ENCODE measurements at regions of chr20 and their contacts with region 1.

Region 1: GRCh38 chr20:63381807-63382322 is 20.7 kb upstream of the CHRNA4 start:
- DNase-seq: peak; percentile 35 to 78 (median 76)
- ATAC-seq: peak; percentile 77
- H3K4me3 ChIP-seq: no peak overlapping the region
- H3K27ac ChIP-seq: no peak overlapping the region
- H3K4me1 ChIP-seq: peaks cover 0 to 8% of the 10 kb centered on the region in 2 experiments; a peak in 2 of 5 replicates
- H3K27me3 ChIP-seq: peaks cover 0 to 33% of the 10 kb centered on the region in 2 experiments; a peak in 2 of 5 replicates
- CTCF ChIP-seq: peak; percentile 81 to 94 (median 94)
- EP300 ChIP-seq: no peak
- POLR2A ChIP-seq: no peak
- RAD21 ChIP-seq: peak; percentile 58 to 84

Region 2: GRCh38 chr20:63183422-63184348 is 198.2 kb before region 1 on chr20:
- CTCF ChIA-PET with region 1: interaction called, 4 read pairs
- POLR2A ChIA-PET with region 1: no interaction called
- in situ Hi-C with region 1: no loop called
- intact Hi-C with region 1: loop called (anchors 5 kb)
- DNase-seq: peak; percentile 65 to 76 (median 69)
- ATAC-seq: peak; percentile 90
- H3K4me3 ChIP-seq: no peak overlapping the region
- H3K27ac ChIP-seq: no peak overlapping the region
- H3K4me1 ChIP-seq: peaks cover 0 to 17% of the 10 kb centered on the region in 2 experiments; a peak in 2 of 5 replicates
- H3K27me3 ChIP-seq: peaks cover 0 to 14% of the 10 kb centered on the region in 2 experiments; a peak in 2 of 5 replicates
- CTCF ChIP-seq: peak; percentile 87 to 93 (median 87)
- EP300 ChIP-seq: no peak
- POLR2A ChIP-seq: no peak
- RAD21 ChIP-seq: peak; percentile 59 to 81

Region 3: DNA sequence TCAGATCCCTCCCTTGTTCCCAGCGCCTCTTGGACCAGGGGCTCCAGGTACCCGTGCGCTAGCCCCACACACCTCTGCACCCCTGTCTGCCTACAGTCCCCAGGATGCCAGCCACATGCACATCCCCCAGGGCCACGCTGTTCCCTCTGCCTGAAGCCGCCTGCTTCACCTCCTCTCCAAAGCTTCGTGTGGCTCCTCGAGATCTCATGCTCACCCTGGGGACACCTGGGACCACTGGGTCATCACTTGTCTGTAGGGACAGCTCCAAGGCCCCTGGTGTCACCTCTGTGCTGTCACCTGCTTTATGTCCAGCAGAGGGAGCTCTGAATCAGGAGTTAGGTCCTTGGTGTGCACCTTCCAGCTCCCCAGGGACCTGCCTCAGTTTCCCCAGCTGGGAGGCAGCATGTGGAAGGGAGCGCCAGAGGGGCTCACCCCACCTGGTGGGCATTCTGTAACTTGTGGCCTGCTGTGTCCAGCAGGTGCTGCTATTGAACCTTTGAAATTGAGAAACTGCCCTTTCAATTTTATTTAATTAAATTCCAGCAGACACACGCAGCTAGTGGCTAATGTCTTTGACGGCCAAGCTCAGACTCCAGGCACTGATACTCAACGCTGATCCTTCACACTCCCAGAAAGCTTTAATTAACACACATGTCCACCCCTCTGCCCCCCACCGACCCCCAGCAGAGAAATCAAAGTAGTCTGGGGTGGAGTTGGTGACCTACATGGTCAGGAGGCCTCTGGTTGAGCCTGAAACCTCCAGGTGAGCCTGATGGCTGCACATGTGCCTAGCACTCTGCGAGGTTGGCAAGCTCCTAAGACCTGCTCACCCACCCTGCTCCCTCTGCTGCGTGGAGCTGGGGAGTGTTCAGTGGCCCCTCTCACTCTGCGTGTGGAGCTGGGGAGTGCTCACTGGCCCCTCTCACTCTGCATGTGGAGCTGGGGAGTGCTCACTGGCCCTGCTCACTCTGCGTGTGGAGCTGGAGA is 158.4 kb before region 1 on chr20:
- CTCF ChIA-PET with region 1: interaction called, 4 read pairs
- POLR2A ChIA-PET with region 1: interaction called, 3 read pairs
- in situ Hi-C with region 1: no loop called
- intact Hi-C with region 1: loop called (anchors 5 kb)
- DNase-seq: peak; percentile 49 to 70 (median 58)
- ATAC-seq: peak; percentile 83
- H3K4me3 ChIP-seq: no peak overlapping the region
- H3K27ac ChIP-seq: no peak overlapping the region
- H3K4me1 ChIP-seq: peaks cover 0 to 24% of the 10 kb centered on the region in 2 experiments; a peak in 2 of 5 replicates
- H3K27me3 ChIP-seq: peaks cover 2 to 42% of the 10 kb centered on the region in 2 experiments
- CTCF ChIP-seq: peak; percentile 79 to 88 (median 79)
- EP300 ChIP-seq: no peak
- POLR2A ChIP-seq: no peak
- RAD21 ChIP-seq: peak; percentile 40 to 86

Region 4: GRCh38 chr20:63309261-63310071 is 72.4 kb before region 1 on chr20:
- CTCF ChIA-PET with region 1: interaction called, 10 read pairs
- POLR2A ChIA-PET with region 1: no interaction called
- in situ Hi-C with region 1: no loop called
- intact Hi-C with region 1: loop called (anchors 2 kb)
- DNase-seq: peak; percentile 59 to 77 (median 70)
- ATAC-seq: peak; percentile 92
- H3K4me3 ChIP-seq: no peak overlapping the region
- H3K27ac ChIP-seq: no peak overlapping the region
- H3K4me1 ChIP-seq: peaks cover 0 to 59% of the 10 kb centered on the region in 2 experiments; a peak in 2 of 5 replicates
- H3K27me3 ChIP-seq: peaks cover 0 to 60% of the 10 kb centered on the region in 2 experiments; a peak in 2 of 5 replicates
- CTCF ChIP-seq: peak; percentile 73 to 84 (median 78)
- EP300 ChIP-seq: no peak
- POLR2A ChIP-seq: no peak
- RAD21 ChIP-seq: peak in 1 of 2 experiments; percentile 78; a peak in 3 of 4 replicates

Region 5: DNA sequence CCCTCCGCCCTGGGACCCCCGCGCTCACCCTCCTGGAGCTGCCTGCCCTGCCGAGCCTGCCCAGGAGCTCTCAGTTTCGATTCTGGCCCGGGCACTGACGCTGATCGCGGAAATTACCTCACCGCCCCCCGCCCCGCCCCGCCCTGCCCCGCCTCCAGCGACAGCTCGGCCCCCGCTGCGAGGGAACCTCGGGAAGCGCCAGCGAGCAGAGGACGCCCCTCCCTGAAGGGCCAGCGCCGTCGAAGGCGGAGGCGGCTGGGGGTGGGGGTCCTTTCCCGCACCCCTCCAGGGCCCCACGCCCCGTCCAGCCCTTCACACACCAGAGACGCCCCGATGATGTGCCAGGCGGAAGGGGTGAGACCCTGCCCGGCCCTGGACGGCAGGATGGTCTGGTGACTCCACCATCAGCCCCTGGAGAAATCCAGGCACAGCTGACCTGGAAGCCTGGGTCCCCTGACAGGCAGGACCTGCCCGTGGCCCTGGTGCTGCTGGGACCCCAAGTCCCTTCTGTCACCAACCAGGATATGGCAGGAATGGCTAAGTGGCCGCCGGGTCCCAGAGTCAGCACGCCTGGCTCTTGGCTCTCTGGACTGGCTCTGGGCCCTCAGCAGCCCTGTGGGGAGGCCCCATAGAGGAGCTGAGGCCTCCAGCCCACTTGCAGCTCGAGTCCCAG is 192.4 kb after region 1 on chr20 and contains the start of gene HELZ2:
- CTCF ChIA-PET with region 1: no interaction called
- POLR2A ChIA-PET with region 1: no interaction called
- in situ Hi-C with region 1: no loop called
- intact Hi-C with region 1: no loop called
- DNase-seq: peak; percentile 77 to 88 (median 85)
- ATAC-seq: peak; percentile 87
- H3K4me3 ChIP-seq: peak within 1 kb of the TSS; percentile 58
- H3K27ac ChIP-seq: peak within 1 kb of the TSS; percentile 67
- H3K4me1 ChIP-seq: peaks cover 7 to 64% of the 10 kb centered on the region in 2 experiments
- H3K27me3 ChIP-seq: no peaks in the 10 kb centered on the region
- CTCF ChIP-seq: no peak
- EP300 ChIP-seq: no peak
- POLR2A ChIP-seq: no peak
- RAD21 ChIP-seq: no peak
- polyA plus RNA-seq, gene HELZ2: 0.03 TPM in 1 of 2 experiments, not detected in the other